Left ventricle myocardium superior (tissue), 1 donor: ENCODE measurements at regions of chr18 and their contacts with region 1.

Region 1: GRCh38 chr18:12552884-12553242 is 105.0 kb downstream of the SPIRE1 start:
- DNase-seq: no peak
- ATAC-seq: no peak

Region 2: DNA sequence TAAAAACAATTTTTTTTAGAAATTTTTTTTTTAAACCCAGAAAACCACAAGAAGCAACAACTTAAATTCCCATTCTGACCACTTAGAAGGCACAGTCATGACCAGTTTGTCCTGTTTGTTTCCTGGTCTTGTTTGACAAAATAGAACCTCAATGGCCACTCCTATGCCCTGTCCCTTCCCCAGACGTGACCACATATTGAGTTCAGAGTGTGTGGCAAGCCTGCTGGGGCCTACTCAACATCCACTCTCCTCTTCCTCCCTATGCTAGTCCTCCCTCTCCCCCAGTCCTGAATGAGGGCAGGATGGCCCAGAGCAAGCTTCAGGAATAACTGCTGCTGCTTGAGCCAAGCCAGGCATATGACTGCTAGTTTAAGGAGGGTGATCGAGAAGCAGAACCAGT is 55.6 kb before region 1 on chr18:
- intact Hi-C with region 1: no loop called
- DNase-seq: no peak
- ATAC-seq: no peak

Region 3: GRCh38 chr18:12645254-12646203 is 92.7 kb after region 1 on chr18:
- intact Hi-C with region 1: loop called (anchors 5 kb)
- DNase-seq: peak; percentile 59
- ATAC-seq: peak; percentile 97